IMR-90 (cell line): ENCODE measurements at regions of chr11 and their contacts with region 1.

Region 1: GRCh38 chr11:101860696-101861427 is 53.9 kb upstream of the CEP126 start:
- DNase-seq: peak; percentile 76
- ATAC-seq: peak; percentile 85
- H3K4me3 ChIP-seq: no peak overlapping the region
- H3K27ac ChIP-seq: no peak overlapping the region
- H3K4me1 ChIP-seq: peaks cover 3% of the 10 kb centered on the region; the same call in 1 of the 2 replicates
- H3K27me3 ChIP-seq: no peaks in the 10 kb centered on the region
- CTCF ChIP-seq: peak; percentile 81
- POLR2A ChIP-seq: no peak
- RAD21 ChIP-seq: peak; percentile 81

Region 2: DNA sequence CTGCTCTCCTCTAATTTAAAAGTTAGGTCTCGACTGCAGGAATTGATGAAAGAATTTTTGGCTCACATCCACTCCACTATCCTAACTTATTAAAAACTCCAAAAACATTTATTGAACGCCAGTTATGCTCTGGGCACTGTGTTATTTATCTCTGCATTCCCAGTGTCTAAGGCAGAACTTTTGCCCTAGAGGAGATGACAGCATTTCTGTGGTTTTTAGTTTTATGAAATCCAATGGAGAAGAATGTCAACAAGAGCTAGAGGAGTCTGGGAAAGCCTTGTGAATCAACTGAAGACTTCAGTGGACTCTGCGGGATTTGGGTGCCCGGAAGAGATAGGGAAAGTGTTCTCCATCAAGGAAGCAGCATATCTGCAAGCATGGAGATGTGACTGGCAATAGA is 514.3 kb before region 1 on chr11:
- CTCF ChIA-PET with region 1: no interaction called
- POLR2A ChIA-PET with region 1: no interaction called
- dilution Hi-C with region 1: no loop called
- in situ Hi-C with region 1: no loop called
- intact Hi-C with region 1: no loop called
- DNase-seq: peak; percentile 20
- ATAC-seq: peak; percentile 94
- H3K4me3 ChIP-seq: no peak overlapping the region
- H3K27ac ChIP-seq: no peak overlapping the region
- H3K4me1 ChIP-seq: no peaks in the 10 kb centered on the region
- H3K27me3 ChIP-seq: no peaks in the 10 kb centered on the region
- CTCF ChIP-seq: no peak
- POLR2A ChIP-seq: no peak
- RAD21 ChIP-seq: no peak

Region 3: DNA sequence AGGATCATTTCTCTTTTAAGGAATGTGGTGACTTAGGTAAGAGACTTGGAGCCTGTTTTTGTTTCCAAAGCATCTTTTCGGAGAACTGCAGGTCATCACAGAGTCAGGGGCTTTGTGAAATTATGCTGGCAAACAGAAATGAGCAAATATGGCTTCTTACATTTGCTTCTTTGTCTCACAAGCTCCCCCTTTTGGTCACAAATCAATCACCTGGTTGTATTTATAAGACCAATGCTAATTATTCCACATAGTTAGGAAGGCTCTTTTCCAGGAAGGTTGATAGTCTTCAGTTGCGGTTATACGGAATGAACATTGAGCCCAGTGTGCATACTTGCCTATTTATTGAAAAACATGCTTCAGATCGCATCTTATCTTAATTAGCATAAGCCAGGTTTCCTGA is 19.4 kb after region 1 on chr11:
- CTCF ChIA-PET with region 1: interaction called, 13 read pairs
- POLR2A ChIA-PET with region 1: no interaction called
- dilution Hi-C with region 1: no loop called
- in situ Hi-C with region 1: no loop called
- intact Hi-C with region 1: no loop called
- DNase-seq: peak; percentile 79
- ATAC-seq: peak; percentile 35; the same call in 1 of the 2 replicates
- H3K4me3 ChIP-seq: no peak overlapping the region
- H3K27ac ChIP-seq: no peak overlapping the region
- H3K4me1 ChIP-seq: no peaks in the 10 kb centered on the region; the same call in 1 of the 2 replicates
- H3K27me3 ChIP-seq: no peaks in the 10 kb centered on the region
- CTCF ChIP-seq: peak; percentile 53
- POLR2A ChIP-seq: no peak
- RAD21 ChIP-seq: peak; percentile 45

Region 4: GRCh38 chr11:101914738-101915426 is 54.0 kb after region 1 on chr11 and contains the start of gene CEP126:
- CTCF ChIA-PET with region 1: interaction called, 12 read pairs
- POLR2A ChIA-PET with region 1: no interaction called
- dilution Hi-C with region 1: no loop called
- in situ Hi-C with region 1: no loop called
- intact Hi-C with region 1: loop called (anchors 1 kb)
- DNase-seq: peak; percentile 93
- ATAC-seq: peak; percentile 96
- H3K4me3 ChIP-seq: peak within 1 kb of the TSS; percentile 97
- H3K27ac ChIP-seq: peak within 1 kb of the TSS; percentile 77
- H3K4me1 ChIP-seq: peaks cover 8% of the 10 kb centered on the region
- H3K27me3 ChIP-seq: no peaks in the 10 kb centered on the region
- CTCF ChIP-seq: peak; percentile 51
- POLR2A ChIP-seq: peak; percentile 69
- RAD21 ChIP-seq: peak; percentile 36
- total RNA-seq, gene CEP126: 0.72 and 1.1 TPM in 2 replicates

Region 5: DNA sequence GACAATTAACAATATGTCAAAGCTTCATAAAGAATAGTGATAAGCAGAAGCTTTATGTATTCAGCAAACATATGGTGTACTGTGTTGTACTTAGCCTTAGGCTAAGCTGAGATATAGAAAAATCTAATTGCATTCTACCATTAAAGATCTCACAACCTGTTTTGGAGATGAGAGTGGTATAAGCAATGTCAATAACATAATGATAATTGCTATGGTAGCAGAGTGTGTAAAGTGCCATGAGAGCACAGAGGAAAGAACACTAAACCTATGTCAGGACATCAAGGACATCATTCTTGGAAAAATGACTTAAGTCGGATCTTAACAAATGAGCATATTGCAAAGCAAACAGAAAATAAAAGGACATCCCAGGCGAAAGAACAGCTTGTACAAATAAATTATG is 84.1 kb after region 1 on chr11:
- CTCF ChIA-PET with region 1: no interaction called
- POLR2A ChIA-PET with region 1: no interaction called
- dilution Hi-C with region 1: no loop called
- in situ Hi-C with region 1: no loop called
- intact Hi-C with region 1: no loop called
- DNase-seq: no peak
- ATAC-seq: no peak
- H3K4me3 ChIP-seq: no peak overlapping the region
- H3K27ac ChIP-seq: no peak overlapping the region
- H3K4me1 ChIP-seq: no peaks in the 10 kb centered on the region
- H3K27me3 ChIP-seq: no peaks in the 10 kb centered on the region
- CTCF ChIP-seq: no peak
- POLR2A ChIP-seq: no peak
- RAD21 ChIP-seq: no peak

Region 6: DNA sequence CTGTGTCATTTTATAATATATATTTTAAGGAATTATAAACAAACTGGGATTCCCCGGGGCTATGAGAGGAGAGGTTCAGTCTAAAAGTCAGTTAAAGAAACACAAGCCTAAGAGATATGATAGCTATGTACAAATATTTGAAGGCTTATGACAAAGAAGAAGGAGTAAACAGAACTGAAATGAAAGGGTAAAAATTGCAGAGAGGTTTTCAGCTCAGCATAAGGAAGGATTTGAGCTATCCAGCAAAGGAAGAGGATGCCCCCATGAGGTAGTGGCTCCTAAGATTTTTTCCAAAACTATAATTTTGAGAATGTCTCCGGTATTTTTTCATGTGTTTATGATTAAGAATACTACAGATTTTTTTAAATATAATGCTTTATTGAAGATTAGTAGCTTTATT is 113.4 kb after region 1 on chr11:
- CTCF ChIA-PET with region 1: interaction called, 43 read pairs
- POLR2A ChIA-PET with region 1: no interaction called
- dilution Hi-C with region 1: no loop called
- in situ Hi-C with region 1: no loop called
- intact Hi-C with region 1: loop called (anchors 1 kb)
- DNase-seq: peak; percentile 43
- ATAC-seq: peak; percentile 95
- H3K4me3 ChIP-seq: no peak overlapping the region
- H3K27ac ChIP-seq: no peak overlapping the region
- H3K4me1 ChIP-seq: no peaks in the 10 kb centered on the region
- H3K27me3 ChIP-seq: no peaks in the 10 kb centered on the region
- CTCF ChIP-seq: peak; percentile 48
- POLR2A ChIP-seq: no peak
- RAD21 ChIP-seq: peak; percentile 47

Region 7: GRCh38 chr11:102007567-102008437 is 146.9 kb after region 1 on chr11:
- CTCF ChIA-PET with region 1: interaction called, 58 read pairs
- POLR2A ChIA-PET with region 1: no interaction called
- dilution Hi-C with region 1: no loop called
- in situ Hi-C with region 1: loop called (anchors 5 kb)
- intact Hi-C with region 1: loop called (anchors 1 kb)
- DNase-seq: peak; percentile 66
- ATAC-seq: peak; percentile 59; the same call in 1 of the 2 replicates
- H3K4me3 ChIP-seq: no peak overlapping the region
- H3K27ac ChIP-seq: no peak overlapping the region
- H3K4me1 ChIP-seq: peaks cover 10% of the 10 kb centered on the region
- H3K27me3 ChIP-seq: no peaks in the 10 kb centered on the region
- CTCF ChIP-seq: peak; percentile 62
- POLR2A ChIP-seq: no peak
- RAD21 ChIP-seq: peak; percentile 65

Region 8: DNA sequence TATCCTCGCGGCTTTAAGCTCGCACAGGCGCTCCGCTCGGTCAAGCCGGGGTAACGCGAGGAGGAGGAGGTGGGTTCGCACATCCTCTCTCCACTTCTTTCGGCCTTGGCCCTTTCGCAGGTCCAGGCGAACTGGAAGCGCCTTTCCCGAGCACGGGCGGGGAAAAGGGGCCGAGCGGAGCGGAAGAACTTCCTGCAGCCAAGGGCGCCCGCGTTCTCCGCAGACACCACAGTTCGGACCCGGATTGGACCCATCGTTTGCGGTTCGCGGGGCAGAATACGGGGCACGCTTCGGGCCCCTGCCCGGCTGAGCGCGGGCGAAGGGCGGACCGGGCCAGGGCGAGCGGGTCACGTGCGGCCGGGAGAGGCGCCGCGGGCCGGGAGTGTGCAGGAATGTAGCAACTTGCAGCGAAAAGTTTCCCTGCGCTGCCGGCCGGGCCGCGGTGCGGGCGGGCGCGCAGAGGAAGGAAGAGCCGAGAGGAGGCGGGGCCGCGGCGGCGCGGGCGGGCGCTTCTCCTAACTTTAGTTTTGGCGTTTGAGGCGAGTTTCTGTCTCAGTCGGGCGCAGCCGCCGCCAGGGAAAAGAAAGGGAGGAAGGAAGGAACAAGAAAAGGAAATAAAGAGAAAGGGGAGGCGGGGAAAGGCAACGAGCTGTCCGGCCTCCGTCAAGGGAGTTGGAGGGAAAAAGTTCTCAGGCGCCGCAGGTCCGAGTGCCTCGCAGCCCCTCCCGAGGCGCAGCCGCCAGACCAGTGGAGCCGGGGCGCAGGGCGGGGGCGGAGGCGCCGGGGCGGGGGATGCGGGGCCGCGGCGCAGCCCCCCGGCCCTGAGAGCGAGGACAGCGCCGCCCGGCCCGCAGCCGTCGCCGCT is 249.3 kb after region 1 on chr11 and contains the start of gene YAP1:
- CTCF ChIA-PET with region 1: no interaction called
- POLR2A ChIA-PET with region 1: no interaction called
- dilution Hi-C with region 1: no loop called
- in situ Hi-C with region 1: no loop called
- intact Hi-C with region 1: loop called (anchors 2 kb)
- DNase-seq: peak; percentile 91
- ATAC-seq: peak; percentile 78
- H3K4me3 ChIP-seq: peak within 1 kb of the TSS; percentile 89
- H3K27ac ChIP-seq: peak within 1 kb of the TSS; percentile 100
- H3K4me1 ChIP-seq: peaks cover 7% of the 10 kb centered on the region
- H3K27me3 ChIP-seq: no peaks in the 10 kb centered on the region
- CTCF ChIP-seq: no peak
- POLR2A ChIP-seq: peak; percentile 61; the same call in 1 of the 2 replicates
- RAD21 ChIP-seq: no peak
- total RNA-seq, gene YAP1: 207 and 251 TPM in 2 replicates

Region 9: GRCh38 chr11:102225689-102226568 is 365.1 kb after region 1 on chr11:
- CTCF ChIA-PET with region 1: no interaction called
- POLR2A ChIA-PET with region 1: no interaction called
- dilution Hi-C with region 1: no loop called
- in situ Hi-C with region 1: loop called (anchors 25 kb)
- intact Hi-C with region 1: loop called (anchors 10 kb)
- DNase-seq: peak; percentile 97
- ATAC-seq: peak; percentile 91
- H3K4me3 ChIP-seq: peak overlapping the region; percentile 11; the same call in 1 of the 2 replicates
- H3K27ac ChIP-seq: peak overlapping the region; percentile 42; the same call in 1 of the 2 replicates
- H3K4me1 ChIP-seq: peaks cover 18% of the 10 kb centered on the region
- H3K27me3 ChIP-seq: no peaks in the 10 kb centered on the region
- CTCF ChIP-seq: no peak
- POLR2A ChIP-seq: peak; percentile 50; the same call in 1 of the 2 replicates
- RAD21 ChIP-seq: peak; percentile 1; the same call in 1 of the 2 replicates